ENCODE measurements at regions of chr2 and their contacts with region 1.

Region 1: GRCh38 chr2:169109502-169110409 is 40.4 kb downstream of the DHRS9 start:
- DNase-seq: peak; percentile 86
- ATAC-seq: peak; percentile 34
- H3K4me3 Mint-ChIP-seq: no peak overlapping the region
- H3K27ac Mint-ChIP-seq: no peak overlapping the region
- H3K4me1 Mint-ChIP-seq: peaks cover 45% of the 10 kb centered on the region
- H3K27me3 Mint-ChIP-seq: peaks cover 3% of the 10 kb centered on the region

Region 2: GRCh38 chr2:168801961-168802858 is 307.5 kb before region 1 on chr2 and contains the start of gene NOSTRIN:
- CTCF ChIA-PET with region 1: no interaction called
- POLR2A ChIA-PET with region 1: no interaction called
- intact Hi-C with region 1: no loop called
- DNase-seq: no peak
- ATAC-seq: no peak
- H3K4me3 Mint-ChIP-seq: no peak within 1 kb of the TSS
- H3K27ac Mint-ChIP-seq: no peak within 1 kb of the TSS
- H3K4me1 Mint-ChIP-seq: no peaks in the 10 kb centered on the region
- H3K27me3 Mint-ChIP-seq: no peaks in the 10 kb centered on the region
- total RNA-seq, gene NOSTRIN: not detected

Region 3: DNA sequence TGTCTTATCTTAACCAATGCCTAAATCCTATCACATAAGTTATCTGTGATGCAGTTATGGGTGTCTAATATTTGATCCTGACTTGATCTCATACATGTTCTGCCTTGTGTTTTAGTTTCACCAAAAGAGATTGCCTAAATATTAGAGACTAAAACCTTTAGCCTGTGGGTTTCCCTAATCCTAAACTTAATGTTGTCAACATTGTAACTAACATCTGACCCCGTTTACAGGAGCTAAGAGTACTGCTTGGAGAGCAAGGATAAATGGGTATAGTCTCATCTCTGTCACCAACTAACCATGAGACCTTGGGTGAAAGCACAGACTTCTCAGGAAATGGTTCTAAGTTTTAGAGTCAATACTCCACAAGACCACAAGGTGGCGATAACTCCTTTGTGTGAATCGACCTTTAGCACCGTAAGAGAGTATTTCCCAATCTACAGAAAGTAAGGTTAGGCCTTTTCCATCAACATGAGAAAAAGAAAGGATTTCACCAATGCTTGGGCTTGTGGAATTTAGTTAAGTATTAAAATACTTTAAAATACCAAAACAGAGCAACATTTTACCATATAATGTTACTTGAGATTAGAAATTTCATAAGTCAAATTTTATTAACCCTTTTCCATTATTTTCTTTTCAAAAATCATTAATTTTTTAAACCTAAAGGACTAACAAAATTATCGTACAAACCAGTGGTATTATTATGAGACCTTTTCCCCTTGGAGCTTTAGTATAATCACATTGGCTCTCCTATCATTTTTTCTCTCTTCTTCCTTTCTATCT is 148.1 kb before region 1 on chr2:
- CTCF ChIA-PET with region 1: interaction called, 12 read pairs
- POLR2A ChIA-PET with region 1: no interaction called
- intact Hi-C with region 1: loop called in 1 of 2 experiments (anchors 1 kb)
- DNase-seq: peak; percentile 26
- ATAC-seq: peak; percentile 89
- H3K4me3 Mint-ChIP-seq: no peak overlapping the region
- H3K27ac Mint-ChIP-seq: no peak overlapping the region
- H3K4me1 Mint-ChIP-seq: peaks cover 34% of the 10 kb centered on the region
- H3K27me3 Mint-ChIP-seq: peaks cover 2% of the 10 kb centered on the region

Region 4: GRCh38 chr2:169069341-169069740 is 40.4 kb before region 1 on chr2 and contains the start of gene DHRS9:
- CTCF ChIA-PET with region 1: interaction called, 6 read pairs
- POLR2A ChIA-PET with region 1: no interaction called
- intact Hi-C with region 1: loop called in 1 of 2 experiments (anchors 2 kb)
- DNase-seq: peak; percentile 67
- ATAC-seq: peak; percentile 88
- H3K4me3 Mint-ChIP-seq: peak within 1 kb of the TSS; percentile 69
- H3K27ac Mint-ChIP-seq: peak within 1 kb of the TSS; percentile 70
- H3K4me1 Mint-ChIP-seq: peaks cover 42% of the 10 kb centered on the region
- H3K27me3 Mint-ChIP-seq: no peaks in the 10 kb centered on the region
- total RNA-seq, gene DHRS9: 4.1 to 4.8 TPM

Region 5: GRCh38 chr2:169095621-169096105 is 14.1 kb before region 1 on chr2:
- CTCF ChIA-PET with region 1: interaction called, 41 read pairs
- POLR2A ChIA-PET with region 1: no interaction called
- intact Hi-C with region 1: loop called in 1 of 2 experiments (anchors 1 kb)
- DNase-seq: peak; percentile 34
- ATAC-seq: peak; percentile 87
- H3K4me3 Mint-ChIP-seq: no peak overlapping the region
- H3K27ac Mint-ChIP-seq: peak overlapping the region; percentile 28
- H3K4me1 Mint-ChIP-seq: peaks cover 25% of the 10 kb centered on the region
- H3K27me3 Mint-ChIP-seq: peaks cover 6% of the 10 kb centered on the region

Region 6: DNA sequence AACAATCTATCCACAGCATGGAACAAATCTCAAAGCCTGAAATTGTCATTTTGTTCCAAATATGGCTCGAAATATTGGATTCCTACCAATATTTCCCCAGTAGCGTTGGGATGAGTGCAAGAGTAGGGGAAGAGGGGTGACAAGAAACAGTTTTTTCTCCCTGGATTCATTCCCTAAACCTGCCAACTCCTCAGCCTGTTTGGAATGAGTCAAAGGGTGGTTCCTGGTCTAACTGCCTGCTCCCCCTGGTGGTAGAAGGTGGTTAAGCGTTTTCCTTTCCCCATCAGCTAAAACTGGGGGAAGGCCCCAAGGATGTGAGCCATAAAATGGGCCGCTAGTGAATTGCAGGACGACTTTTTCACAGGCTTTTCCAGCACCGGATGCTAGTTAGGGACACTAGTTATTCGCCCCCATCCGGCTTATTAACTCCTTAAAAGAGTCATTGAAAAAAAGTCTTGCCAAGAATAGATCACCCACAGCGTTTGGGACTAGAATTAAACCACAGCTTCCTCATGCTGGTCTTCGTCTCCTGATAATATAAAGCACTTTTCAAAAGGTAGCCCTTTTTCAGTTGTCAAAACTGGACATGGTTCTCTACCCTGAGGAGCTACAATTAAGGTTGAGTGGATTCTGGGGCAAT is 32.1 kb after region 1 on chr2:
- CTCF ChIA-PET with region 1: interaction called, 123 read pairs
- POLR2A ChIA-PET with region 1: no interaction called
- intact Hi-C with region 1: loop called (anchors 1 kb)
- DNase-seq: peak; percentile 75
- ATAC-seq: peak; percentile 85
- H3K4me3 Mint-ChIP-seq: no peak overlapping the region
- H3K27ac Mint-ChIP-seq: no peak overlapping the region
- H3K4me1 Mint-ChIP-seq: no peaks in the 10 kb centered on the region
- H3K27me3 Mint-ChIP-seq: no peaks in the 10 kb centered on the region

Region 7: DNA sequence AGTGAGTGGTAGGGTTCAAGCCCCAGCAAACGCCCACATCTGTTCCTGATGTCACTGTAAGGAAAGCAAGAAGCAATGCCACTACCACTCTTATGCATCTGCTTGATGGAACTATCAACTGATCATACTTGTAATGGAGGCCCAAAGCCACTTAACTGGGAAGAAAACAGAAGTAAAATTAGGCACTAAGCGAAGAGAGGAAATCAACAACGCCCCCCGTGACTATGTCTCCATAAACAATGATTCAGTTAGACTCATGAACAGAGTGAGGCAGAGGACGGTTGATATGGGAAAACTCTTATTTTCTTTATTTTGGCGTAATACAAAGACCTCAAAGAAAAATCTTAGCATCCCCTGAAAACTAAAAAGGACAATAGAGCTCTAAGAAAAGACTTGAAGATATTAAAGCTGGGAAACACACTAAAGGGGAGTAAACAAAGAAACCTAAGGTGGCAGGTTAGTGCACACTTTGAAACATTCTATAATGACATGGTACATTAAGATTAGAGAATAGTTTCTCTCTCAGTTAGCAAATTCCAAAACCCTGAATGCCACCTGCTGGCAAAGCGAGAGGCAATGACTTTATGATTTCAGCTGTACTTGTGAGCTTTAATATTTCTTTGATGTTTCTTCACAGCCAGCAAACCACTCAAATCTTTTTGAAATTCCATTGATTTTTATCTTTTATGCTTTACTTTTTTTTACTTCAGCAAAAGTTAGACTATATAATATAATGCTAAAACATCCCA is 166.1 kb after region 1 on chr2:
- CTCF ChIA-PET with region 1: interaction called, 3 read pairs
- POLR2A ChIA-PET with region 1: no interaction called
- intact Hi-C with region 1: loop called in 1 of 2 experiments (anchors 5 kb)
- DNase-seq: peak; percentile 5
- ATAC-seq: no peak
- H3K4me3 Mint-ChIP-seq: no peak overlapping the region
- H3K27ac Mint-ChIP-seq: no peak overlapping the region
- H3K4me1 Mint-ChIP-seq: no peaks in the 10 kb centered on the region
- H3K27me3 Mint-ChIP-seq: peaks cover 9% of the 10 kb centered on the region

Region 8: GRCh38 chr2:169397697-169398096 is 287.9 kb after region 1 on chr2:
- CTCF ChIA-PET with region 1: interaction called, 6 read pairs
- POLR2A ChIA-PET with region 1: no interaction called
- intact Hi-C with region 1: loop called in 1 of 2 experiments (anchors 1 kb)
- DNase-seq: no peak
- ATAC-seq: no peak
- H3K4me3 Mint-ChIP-seq: no peak overlapping the region
- H3K27ac Mint-ChIP-seq: no peak overlapping the region
- H3K4me1 Mint-ChIP-seq: no peaks in the 10 kb centered on the region
- H3K27me3 Mint-ChIP-seq: peaks cover 9% of the 10 kb centered on the region

Measured in activated CD4-positive, alpha-beta T cell treated with anti-CD3 and anti-CD28 coated beads for 36 hours (primary cell).